Endothelial cell of umbilical vein (primary cell): ENCODE measurements at regions of chr11 and their contacts with region 1.

Region 1: DNA sequence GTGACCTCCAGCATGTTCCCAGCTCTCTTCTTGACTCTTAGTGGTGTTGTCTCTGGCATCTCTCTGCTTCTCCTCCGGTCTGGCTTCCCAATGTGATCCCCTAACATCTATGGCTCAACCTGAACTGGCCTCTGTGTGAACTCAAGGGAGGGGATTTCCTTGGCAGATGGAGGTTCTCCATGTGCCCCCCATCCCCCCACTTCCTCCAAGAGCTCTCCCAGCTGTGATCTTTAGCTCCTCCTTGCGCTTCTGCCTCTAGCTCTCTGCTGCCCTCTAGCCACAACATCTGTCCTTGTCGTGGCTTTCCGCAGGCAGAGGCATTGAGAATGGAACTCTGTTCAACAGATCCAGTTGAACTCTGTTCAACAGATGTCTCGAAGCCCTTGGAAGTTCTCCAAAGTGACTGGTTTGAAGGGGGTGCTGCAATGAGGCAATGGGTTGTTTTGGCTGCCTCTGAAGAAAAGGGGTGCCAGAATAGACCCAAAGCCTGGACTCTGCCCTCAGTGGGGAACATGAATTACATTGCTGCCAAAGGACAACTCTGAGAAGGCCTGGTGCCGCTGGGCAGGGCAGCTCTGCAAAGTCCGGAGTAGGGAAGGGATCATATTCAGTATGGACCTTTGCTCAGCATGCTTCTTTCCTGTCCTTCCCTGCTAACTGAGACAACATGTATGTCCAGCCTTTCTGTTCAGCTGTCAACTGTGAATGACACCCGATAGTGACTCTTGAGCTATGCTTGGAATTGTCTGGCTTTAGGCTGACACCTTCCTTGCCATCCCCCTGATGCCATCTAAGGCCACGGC is 61.9 kb downstream of the ADM start:
- DNase-seq: peak; percentile 94
- H3K4me3 ChIP-seq: no peak overlapping the region
- H3K27ac ChIP-seq: peak overlapping the region; percentile 21
- H3K4me1 ChIP-seq: peaks cover 6% of the 10 kb centered on the region
- H3K27me3 ChIP-seq: no peaks in the 10 kb centered on the region
- CTCF ChIP-seq: peak; percentile 85 to 91
- POLR2A ChIP-seq: no peak

Region 2: DNA sequence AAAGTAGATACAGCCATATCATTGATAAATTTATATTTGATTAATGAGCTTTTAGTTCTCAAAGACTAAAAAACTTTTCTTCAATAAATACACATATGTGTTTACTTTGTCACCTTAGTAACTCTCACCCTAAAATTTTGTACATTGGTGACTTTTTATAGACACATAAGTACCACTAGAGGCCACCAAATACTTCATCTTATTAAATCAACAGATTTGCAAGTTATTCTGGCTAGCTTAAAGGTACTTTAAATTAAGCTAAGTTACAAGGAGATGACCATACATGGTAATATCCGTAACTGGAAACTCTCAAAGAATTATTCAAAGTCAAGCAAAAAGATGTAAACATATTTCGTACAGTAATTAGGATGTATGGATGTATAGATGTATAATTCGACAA is 185.0 kb before region 1 on chr11:
- CTCF ChIA-PET with region 1: interaction called, 4 read pairs
- POLR2A ChIA-PET with region 1: no interaction called
- dilution Hi-C with region 1: no loop called
- intact Hi-C with region 1: loop called (anchors 10 kb)
- DNase-seq: peak; percentile 48
- H3K4me3 ChIP-seq: no peak overlapping the region
- H3K27ac ChIP-seq: no peak overlapping the region
- H3K4me1 ChIP-seq: no peaks in the 10 kb centered on the region
- H3K27me3 ChIP-seq: no peaks in the 10 kb centered on the region
- CTCF ChIP-seq: peak; percentile 14 to 16
- POLR2A ChIP-seq: no peak

Region 3: GRCh38 chr11:10233581-10233980 is 133.2 kb before region 1 on chr11:
- CTCF ChIA-PET with region 1: interaction called, 17 read pairs
- POLR2A ChIA-PET with region 1: no interaction called
- dilution Hi-C with region 1: no loop called
- intact Hi-C with region 1: no loop called
- DNase-seq: peak; percentile 44
- H3K4me3 ChIP-seq: no peak overlapping the region
- H3K27ac ChIP-seq: no peak overlapping the region
- H3K4me1 ChIP-seq: no peaks in the 10 kb centered on the region
- H3K27me3 ChIP-seq: no peaks in the 10 kb centered on the region
- CTCF ChIP-seq: no peak
- POLR2A ChIP-seq: no peak

Region 4: DNA sequence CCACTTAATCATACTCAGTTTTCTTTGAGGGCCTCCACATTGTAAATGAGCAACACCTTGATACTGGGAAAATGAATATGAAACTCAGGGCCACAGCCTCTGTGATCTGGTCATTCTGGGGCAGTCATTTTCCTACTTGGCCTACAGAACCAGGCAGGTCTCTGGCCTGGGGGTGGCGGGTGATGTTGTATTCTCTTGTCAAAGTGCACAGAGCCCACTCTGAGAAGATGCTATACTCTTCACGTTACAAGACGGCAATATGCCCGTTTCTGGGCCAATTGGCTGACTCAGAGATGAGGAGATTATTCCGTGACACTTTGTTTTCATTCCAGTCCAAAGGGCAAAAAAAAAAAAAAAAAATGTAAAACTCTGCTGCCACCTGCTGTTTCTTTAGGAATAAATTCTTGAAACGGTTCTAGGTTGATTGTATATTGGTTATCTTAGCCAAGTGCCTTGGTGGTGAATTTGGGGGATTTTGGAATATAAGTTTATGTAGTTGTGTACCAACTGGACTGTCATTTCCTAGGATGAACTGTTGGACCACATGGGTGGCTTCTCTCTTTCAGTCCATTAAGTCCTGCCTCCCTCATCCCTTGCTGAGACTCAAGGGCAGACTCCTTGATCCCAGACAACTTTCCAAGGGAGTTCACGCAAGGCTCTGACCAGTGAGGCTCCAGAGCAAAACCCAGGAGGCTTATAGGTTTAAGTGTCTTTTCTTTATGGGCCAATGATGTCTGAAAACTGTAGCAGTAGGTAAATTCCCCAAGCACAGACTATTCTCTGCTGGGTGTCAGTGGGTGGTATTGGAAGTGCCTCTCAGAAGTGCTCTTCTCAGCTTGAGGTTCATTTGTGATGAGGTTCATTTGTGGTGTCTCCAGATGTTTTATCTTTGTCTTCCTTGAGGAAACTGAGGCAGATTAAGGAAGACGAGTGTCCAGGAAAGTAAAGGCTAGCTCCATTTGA is 43.7 kb before region 1 on chr11:
- CTCF ChIA-PET with region 1: interaction called, 203 read pairs
- POLR2A ChIA-PET with region 1: interaction called, 3 read pairs
- dilution Hi-C with region 1: no loop called
- intact Hi-C with region 1: loop called (anchors 1 kb)
- DNase-seq: peak; percentile 92
- H3K4me3 ChIP-seq: no peak overlapping the region
- H3K27ac ChIP-seq: peak overlapping the region; percentile 28
- H3K4me1 ChIP-seq: peaks cover 57% of the 10 kb centered on the region
- H3K27me3 ChIP-seq: no peaks in the 10 kb centered on the region
- CTCF ChIP-seq: peak; percentile 28 to 46
- POLR2A ChIP-seq: no peak

Region 5: GRCh38 chr11:10405855-10406592 is 39.3 kb after region 1 on chr11:
- CTCF ChIA-PET with region 1: interaction called, 27 read pairs
- POLR2A ChIA-PET with region 1: no interaction called
- dilution Hi-C with region 1: no loop called
- intact Hi-C with region 1: no loop called
- DNase-seq: peak; percentile 89
- H3K4me3 ChIP-seq: no peak overlapping the region
- H3K27ac ChIP-seq: no peak overlapping the region
- H3K4me1 ChIP-seq: peaks cover 26% of the 10 kb centered on the region
- H3K27me3 ChIP-seq: no peaks in the 10 kb centered on the region
- CTCF ChIP-seq: peak; percentile 56 to 73
- POLR2A ChIP-seq: no peak